A549 (cell line): ENCODE measurements at regions of chr2 and their contacts with region 1.

Region 1: GRCh38 chr2:20135631-20136050 is 84.2 kb upstream of the LAPTM4A start:
- DNase-seq: peak; percentile 71 to 75
- ATAC-seq: peak; percentile 81 to 90
- H3K4me3 ChIP-seq: no peak overlapping the region
- H3K27ac ChIP-seq: peak overlapping the region; percentile 10 to 61; a peak in 5 of 6 replicates
- H3K4me1 ChIP-seq: peaks cover 26% of the 10 kb centered on the region
- CTCF ChIP-seq: peak; percentile 89
- EP300 ChIP-seq: no peak
- POLR2A ChIP-seq: no peak
- RAD21 ChIP-seq: peak; percentile 91 to 92

Region 2: DNA sequence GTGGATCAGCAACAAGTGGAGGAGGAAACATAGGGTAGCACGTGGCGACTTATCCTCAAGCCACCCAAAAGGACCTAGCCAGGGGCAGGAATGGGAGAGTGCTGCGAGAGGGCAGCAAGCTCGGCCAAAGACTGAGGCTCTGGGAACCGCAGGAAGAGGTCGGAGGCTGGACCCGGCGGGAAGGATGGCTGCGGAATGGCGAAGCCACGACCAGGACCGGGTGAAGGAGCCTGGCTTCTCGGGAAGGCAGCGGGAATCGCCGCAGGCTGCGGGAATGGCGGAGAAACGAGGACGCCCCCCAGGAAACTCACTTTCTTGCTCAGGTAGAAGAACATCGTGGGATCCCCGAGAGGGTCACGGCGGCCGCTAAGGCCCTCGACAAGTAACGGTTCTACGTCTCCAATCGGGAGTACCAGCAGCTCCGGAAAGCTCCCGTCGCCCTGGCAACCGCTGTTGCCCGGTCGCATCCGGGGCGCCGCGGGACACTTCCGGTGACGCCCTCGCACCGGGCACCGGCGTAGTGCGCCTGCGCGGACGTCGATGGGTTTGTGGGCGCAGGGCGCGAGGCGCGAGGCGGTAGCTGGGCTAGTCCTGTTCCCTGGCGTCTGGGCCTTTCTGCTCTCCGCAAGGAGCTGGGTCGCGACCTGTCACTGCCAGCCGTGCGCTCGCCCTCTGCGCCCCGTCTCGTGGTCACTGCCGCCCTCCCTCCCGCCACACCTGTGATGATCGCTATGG is 145.8 kb before region 1 on chr2 and contains the start of gene WDR35:
- CTCF ChIA-PET with region 1: no interaction called
- POLR2A ChIA-PET with region 1: no interaction called
- DNase-seq: peak; percentile 94 to 98
- ATAC-seq: peak; percentile 98
- H3K4me3 ChIP-seq: peak within 1 kb of the TSS; percentile 68
- H3K27ac ChIP-seq: peak within 1 kb of the TSS; percentile 73 to 89
- H3K4me1 ChIP-seq: peaks cover 17% of the 10 kb centered on the region
- CTCF ChIP-seq: no peak
- EP300 ChIP-seq: no peak
- POLR2A ChIP-seq: peak; percentile 99
- RAD21 ChIP-seq: no peak
- polyA plus RNA-seq, gene WDR35: 24.6 and 28.5 TPM in 2 replicates

Region 3: GRCh38 chr2:20125616-20126015 is 10.0 kb before region 1 on chr2:
- CTCF ChIA-PET with region 1: interaction called, 69 read pairs
- POLR2A ChIA-PET with region 1: no interaction called
- DNase-seq: no peak
- ATAC-seq: no peak
- H3K4me3 ChIP-seq: no peak overlapping the region
- H3K27ac ChIP-seq: no peak overlapping the region
- H3K4me1 ChIP-seq: no peaks in the 10 kb centered on the region
- CTCF ChIP-seq: no peak
- EP300 ChIP-seq: no peak
- POLR2A ChIP-seq: no peak
- RAD21 ChIP-seq: no peak

Region 4: DNA sequence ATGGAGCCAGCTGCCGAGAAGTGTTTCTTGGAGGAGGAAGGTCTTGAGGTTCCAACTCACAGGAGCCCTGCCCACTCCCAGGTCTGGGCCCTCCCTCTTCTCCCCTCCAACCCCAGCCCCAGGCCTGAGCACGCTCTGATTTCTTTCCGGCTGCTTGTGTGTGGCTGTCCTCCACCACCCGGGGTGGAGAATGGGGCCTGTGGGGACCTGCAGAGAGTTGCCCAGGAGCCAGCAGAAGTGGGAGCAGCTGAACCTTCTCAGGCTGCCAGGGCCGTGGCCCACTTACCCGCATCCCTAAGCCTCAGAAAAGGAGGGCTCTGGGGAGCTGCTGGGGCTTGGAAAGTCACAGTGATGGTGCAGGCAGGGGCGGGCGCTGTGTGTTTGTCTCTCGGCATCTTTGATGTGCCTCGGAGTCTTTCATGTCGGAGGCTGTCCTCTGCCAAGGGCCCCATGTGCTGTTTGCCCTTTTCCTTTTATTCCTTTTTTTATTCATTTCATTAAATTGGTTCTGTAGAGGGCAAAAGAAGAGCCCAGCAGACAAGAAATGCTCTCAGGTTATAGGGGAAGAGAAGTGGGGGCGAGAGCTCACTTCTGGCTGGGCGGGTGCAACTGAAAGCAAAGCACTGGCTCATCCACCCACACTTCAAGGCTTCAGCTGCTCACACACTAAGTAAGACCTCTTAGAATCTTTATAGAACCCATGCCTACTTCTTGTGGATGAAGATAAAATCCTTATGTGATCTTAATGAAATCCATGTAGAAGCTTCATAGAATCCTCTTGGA is 36.8 kb after region 1 on chr2:
- CTCF ChIA-PET with region 1: interaction called, 115 read pairs
- POLR2A ChIA-PET with region 1: no interaction called
- DNase-seq: no peak
- ATAC-seq: no peak
- H3K4me3 ChIP-seq: no peak overlapping the region
- H3K27ac ChIP-seq: peak overlapping the region in 1 of 2 experiments; percentile 24; a peak in 1 of 6 replicates
- H3K4me1 ChIP-seq: peaks cover 3% of the 10 kb centered on the region
- CTCF ChIP-seq: no peak
- EP300 ChIP-seq: no peak
- POLR2A ChIP-seq: no peak
- RAD21 ChIP-seq: no peak

Region 5: DNA sequence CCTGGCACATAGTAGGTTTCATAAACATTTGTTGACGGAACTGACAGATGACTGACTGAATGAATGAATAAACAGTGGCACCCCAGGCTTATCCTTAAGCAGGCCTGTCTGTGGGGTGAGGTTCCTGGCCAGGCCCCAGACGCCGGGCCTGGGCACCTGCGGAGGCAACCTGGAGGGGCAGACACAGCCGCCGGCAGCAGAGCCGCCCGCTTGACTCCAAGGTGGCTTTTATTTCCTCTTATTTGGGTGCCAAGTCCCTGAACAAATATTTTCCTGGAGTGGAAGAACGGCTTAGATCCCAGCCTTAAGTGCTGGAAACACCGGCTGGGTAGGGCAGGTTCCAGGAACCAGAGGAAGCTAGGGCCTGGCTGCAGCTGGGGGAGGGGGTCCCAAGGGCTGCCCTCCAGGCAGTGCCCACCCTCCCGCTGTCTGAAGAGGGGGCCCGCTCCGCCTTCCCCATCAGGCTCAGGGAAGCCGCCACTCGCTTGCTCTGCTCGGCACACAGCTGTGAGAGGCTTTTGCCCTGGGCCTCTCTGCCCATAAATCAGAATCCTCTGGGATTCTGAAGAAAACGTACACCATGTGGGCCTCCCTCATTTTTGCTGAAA is 61.0 kb after region 1 on chr2:
- CTCF ChIA-PET with region 1: interaction called, 111 read pairs
- POLR2A ChIA-PET with region 1: no interaction called
- DNase-seq: no peak
- ATAC-seq: no peak
- H3K4me3 ChIP-seq: no peak overlapping the region
- H3K27ac ChIP-seq: peak overlapping the region; percentile 35 to 70; a peak in 4 of 6 replicates
- H3K4me1 ChIP-seq: peaks cover 17% of the 10 kb centered on the region
- CTCF ChIP-seq: no peak
- EP300 ChIP-seq: no peak
- POLR2A ChIP-seq: no peak
- RAD21 ChIP-seq: no peak

Region 6: DNA sequence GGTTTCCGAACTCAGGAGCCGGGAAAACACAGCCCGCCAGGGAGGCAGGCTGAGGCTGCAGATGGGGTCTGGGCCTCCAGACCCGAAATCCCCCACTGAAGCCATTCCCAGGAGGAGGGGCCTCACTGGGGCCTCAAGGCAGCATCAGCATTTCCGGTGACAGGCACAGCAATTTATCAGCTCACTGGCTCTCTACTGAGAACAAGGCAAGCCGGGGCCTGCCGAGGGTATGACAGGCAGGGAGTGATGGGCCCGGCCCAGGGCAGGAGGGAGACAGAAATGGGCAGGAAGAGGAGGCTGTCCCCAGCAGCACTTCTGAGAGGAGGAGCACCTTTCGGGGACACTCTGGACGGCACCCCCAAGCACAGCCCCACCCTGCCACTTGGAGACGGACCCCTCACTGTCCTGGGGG is 76.8 kb after region 1 on chr2:
- CTCF ChIA-PET with region 1: interaction called, 202 read pairs
- POLR2A ChIA-PET with region 1: no interaction called
- DNase-seq: no peak
- ATAC-seq: no peak
- H3K4me3 ChIP-seq: no peak overlapping the region
- H3K27ac ChIP-seq: 0 out of 6 replicates have a peak overlapping the region, but pooled peaks of 1 of the 2 experiments have one; percentile 14
- H3K4me1 ChIP-seq: peaks cover 53% of the 10 kb centered on the region
- CTCF ChIP-seq: no peak
- EP300 ChIP-seq: no peak
- POLR2A ChIP-seq: no peak
- RAD21 ChIP-seq: no peak

Region 7: DNA sequence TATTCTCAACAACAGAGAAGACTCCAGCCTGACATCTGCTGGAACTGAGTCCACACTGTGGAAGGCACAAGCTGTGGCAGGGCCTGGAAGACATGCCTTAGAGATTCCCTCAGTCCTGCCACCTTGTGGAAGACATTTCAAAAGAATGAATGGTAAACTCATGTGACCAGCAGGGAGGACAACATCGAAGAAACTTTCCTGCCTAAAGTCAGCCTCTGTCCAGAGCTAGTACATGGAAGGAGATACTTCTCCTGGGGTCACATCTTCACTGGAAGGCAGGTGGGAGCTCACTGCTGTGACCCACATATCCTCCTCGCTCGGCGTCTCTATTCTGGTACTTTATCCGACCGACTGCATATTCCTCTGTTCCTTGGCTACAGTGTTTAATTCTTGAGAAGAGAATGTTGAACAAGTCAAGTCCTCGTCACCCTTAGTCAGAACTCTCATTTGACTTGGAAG is 155.5 kb after region 1 on chr2:
- CTCF ChIA-PET with region 1: interaction called, 19 read pairs
- POLR2A ChIA-PET with region 1: no interaction called
- DNase-seq: peak; percentile 91 to 93
- ATAC-seq: peak; percentile 100
- H3K4me3 ChIP-seq: no peak overlapping the region
- H3K27ac ChIP-seq: peak overlapping the region in 1 of 2 experiments; percentile 33; a peak in 1 of 6 replicates
- H3K4me1 ChIP-seq: peaks cover 23% of the 10 kb centered on the region
- CTCF ChIP-seq: peak; percentile 94
- EP300 ChIP-seq: no peak
- POLR2A ChIP-seq: no peak
- RAD21 ChIP-seq: peak; percentile 63 to 64